SK-N-SH (cell line): ENCODE measurements at regions of chr3 and their contacts with region 1.

Region 1: DNA sequence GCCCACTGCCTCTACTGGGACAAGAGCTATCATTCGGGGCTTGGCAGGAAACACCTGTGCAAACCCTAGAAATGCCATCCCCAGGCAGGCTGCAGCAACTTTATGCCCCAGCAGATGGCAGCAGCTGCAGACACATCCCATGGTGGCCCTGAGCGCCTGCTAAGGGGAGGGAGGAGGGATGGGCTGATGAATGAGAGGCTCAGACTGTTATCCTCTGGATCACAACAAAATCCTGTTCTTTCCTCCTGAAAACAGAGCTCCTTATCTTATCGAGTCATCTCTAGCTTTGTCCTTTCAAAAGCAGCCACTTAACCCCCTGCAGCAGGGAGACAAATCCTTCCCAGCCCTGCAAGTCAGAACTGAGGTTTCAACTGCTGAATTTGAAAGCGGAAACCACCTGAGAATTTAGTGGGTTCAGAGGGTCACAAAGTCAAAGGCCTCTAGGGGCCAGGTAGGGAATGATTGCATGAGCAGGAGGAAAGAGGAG is 90.6 kb upstream of the PROK2 start:
- DNase-seq: peak; percentile 84
- H3K4me3 ChIP-seq: no peak overlapping the region; a peak in 1 of 4 replicates
- H3K27ac ChIP-seq: no peak overlapping the region; a peak in 1 of 4 replicates
- H3K4me1 ChIP-seq: peaks cover 0 to 11% of the 10 kb centered on the region in 2 experiments; a peak in 1 of 4 replicates
- H3K27me3 ChIP-seq: peaks cover 6% of the 10 kb centered on the region; the same call in 1 of the 2 replicates
- CTCF ChIP-seq: peak; percentile 85
- EP300 ChIP-seq: peak in 1 of 2 experiments; percentile 86; a peak in 2 of 4 replicates
- RAD21 ChIP-seq: peak; percentile 97

Region 2: GRCh38 chr3:71447803-71448202 is 427.7 kb before region 1 on chr3:
- CTCF ChIA-PET with region 1: no interaction called
- POLR2A ChIA-PET with region 1: no interaction called
- DNase-seq: no peak
- H3K4me3 ChIP-seq: no peak overlapping the region
- H3K27ac ChIP-seq: no peak overlapping the region
- H3K4me1 ChIP-seq: peaks cover 24 to 35% of the 10 kb centered on the region in 2 experiments
- H3K27me3 ChIP-seq: no peaks in the 10 kb centered on the region
- CTCF ChIP-seq: no peak
- EP300 ChIP-seq: no peak
- RAD21 ChIP-seq: no peak

Region 3: DNA sequence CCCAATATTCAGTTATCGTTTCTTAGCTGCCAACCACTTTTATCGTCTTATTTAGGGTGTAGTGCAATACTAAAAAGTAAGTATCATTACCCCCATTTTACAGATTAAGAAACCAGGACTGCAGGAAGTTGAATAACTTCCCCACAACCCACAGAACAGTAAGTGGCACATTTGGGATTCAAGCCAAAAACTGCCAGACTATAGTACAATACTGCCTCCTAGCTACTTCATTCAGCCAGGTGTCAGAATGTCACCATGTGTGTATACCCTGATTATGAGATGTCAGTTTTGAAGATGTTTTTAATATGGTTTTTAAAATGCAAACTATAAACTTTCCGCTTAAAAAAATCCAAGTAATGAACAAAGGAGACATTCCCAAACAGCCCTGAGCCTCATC is 16.4 kb before region 1 on chr3:
- CTCF ChIA-PET with region 1: interaction called, 22 read pairs
- POLR2A ChIA-PET with region 1: no interaction called
- DNase-seq: peak; percentile 55
- H3K4me3 ChIP-seq: no peak overlapping the region
- H3K27ac ChIP-seq: peak overlapping the region in 1 of 2 experiments; percentile 94; a peak in 2 of 4 replicates
- H3K4me1 ChIP-seq: peaks cover 0 to 15% of the 10 kb centered on the region in 2 experiments; a peak in 2 of 4 replicates
- H3K27me3 ChIP-seq: no peaks in the 10 kb centered on the region; the same call in 1 of the 2 replicates
- CTCF ChIP-seq: peak; percentile 38
- EP300 ChIP-seq: no peak
- RAD21 ChIP-seq: peak; percentile 86

Region 4: GRCh38 chr3:71893122-71893521 is 17.6 kb after region 1 on chr3:
- CTCF ChIA-PET with region 1: interaction called, 44 read pairs
- POLR2A ChIA-PET with region 1: no interaction called
- DNase-seq: peak; percentile 39
- H3K4me3 ChIP-seq: no peak overlapping the region
- H3K27ac ChIP-seq: no peak overlapping the region
- H3K4me1 ChIP-seq: no peaks in the 10 kb centered on the region; a peak in 1 of 4 replicates
- H3K27me3 ChIP-seq: no peaks in the 10 kb centered on the region
- CTCF ChIP-seq: no peak
- EP300 ChIP-seq: no peak
- RAD21 ChIP-seq: peak; percentile 45

Region 5: DNA sequence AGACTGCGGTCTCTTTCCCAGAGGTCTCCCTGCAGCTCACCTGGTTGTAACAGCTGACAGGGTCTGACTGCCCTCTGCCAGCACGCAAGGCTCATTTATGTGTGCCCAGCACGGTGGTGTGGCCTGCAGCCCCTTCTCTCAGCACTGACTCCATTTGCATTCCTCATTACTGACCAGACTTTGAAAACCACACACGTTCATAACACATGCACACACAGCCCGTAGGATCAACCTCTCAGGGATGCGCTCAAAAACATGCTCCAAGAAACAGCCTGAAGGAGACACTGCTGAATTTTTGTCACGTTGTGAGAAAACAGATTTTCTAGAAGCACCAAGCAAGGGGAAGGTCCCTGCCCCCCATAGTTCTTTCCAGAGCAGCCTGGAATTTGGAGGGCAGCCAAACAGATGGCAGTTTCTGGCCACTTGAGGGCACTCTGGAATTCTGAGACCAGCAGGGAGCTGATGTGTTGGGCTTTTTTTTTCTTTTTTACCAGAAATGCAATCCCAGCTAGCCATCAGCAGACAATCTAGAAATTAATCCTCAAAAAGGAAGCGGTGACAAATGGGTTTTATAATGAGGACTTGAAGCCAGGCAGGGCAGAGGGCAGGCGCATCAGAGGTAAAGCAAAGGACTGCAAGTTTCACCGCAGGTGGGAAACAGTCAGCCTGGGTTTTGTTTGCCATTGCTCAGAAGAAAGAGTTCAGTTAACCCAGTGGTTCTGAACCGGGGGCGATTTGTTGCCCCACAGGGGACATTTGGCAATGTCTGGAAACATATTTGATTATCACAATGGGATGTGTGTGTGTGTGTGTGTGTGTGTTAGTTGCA is 80.0 kb after region 1 on chr3:
- CTCF ChIA-PET with region 1: interaction called, 44 read pairs
- POLR2A ChIA-PET with region 1: no interaction called
- DNase-seq: peak; percentile 77
- H3K4me3 ChIP-seq: no peak overlapping the region; a peak in 1 of 4 replicates
- H3K27ac ChIP-seq: peak overlapping the region in 1 of 2 experiments; percentile 95; a peak in 2 of 4 replicates
- H3K4me1 ChIP-seq: peaks cover 0 to 23% of the 10 kb centered on the region in 2 experiments; a peak in 2 of 4 replicates
- H3K27me3 ChIP-seq: peaks cover 6% of the 10 kb centered on the region; the same call in 1 of the 2 replicates
- CTCF ChIP-seq: peak; percentile 79
- EP300 ChIP-seq: peak in 1 of 2 experiments; percentile 96; a peak in 2 of 4 replicates
- RAD21 ChIP-seq: peak; percentile 95